Activated B cell treated with CpG ODN at 0.5 μM for 24 hours (primary cell): ENCODE measurements at regions of chr5 and their contacts with region 1.

Region 1: DNA sequence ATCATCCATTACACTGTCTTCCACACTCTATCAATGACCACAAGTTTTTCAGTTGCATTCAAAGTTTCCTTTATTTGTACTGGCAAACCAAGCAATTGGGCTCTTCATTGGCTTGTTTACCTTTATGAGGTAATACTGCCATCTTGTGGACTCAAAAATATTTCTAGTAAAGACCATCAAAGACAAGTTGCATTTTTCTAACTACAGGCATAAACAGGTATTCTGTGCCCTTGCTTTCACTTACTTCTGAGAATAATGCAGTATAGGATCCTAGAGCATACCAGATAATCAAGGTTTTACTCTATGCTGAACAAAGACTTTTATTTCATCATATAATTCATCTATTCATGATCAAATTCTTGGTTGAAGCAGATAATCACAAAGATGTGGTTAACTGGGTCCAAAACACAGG is 173.7 kb upstream of the POU5F2 start:
- DNase-seq: no peak
- ATAC-seq: no peak
- H3K4me3 Mint-ChIP-seq: no peak overlapping the region
- H3K27ac Mint-ChIP-seq: no peak overlapping the region
- H3K4me1 Mint-ChIP-seq: no peaks in the 10 kb centered on the region
- H3K27me3 Mint-ChIP-seq: no peaks in the 10 kb centered on the region
- CTCF ChIP-seq: no peak

Region 2: GRCh38 chr5:92309336-92309991 is 1605.7 kb before region 1 on chr5:
- CTCF ChIA-PET with region 1: no interaction called
- POLR2A ChIA-PET with region 1: no interaction called
- intact Hi-C with region 1: loop called (anchors 5 kb)
- DNase-seq: no peak
- ATAC-seq: no peak
- H3K4me3 Mint-ChIP-seq: no peak overlapping the region
- H3K27ac Mint-ChIP-seq: no peak overlapping the region
- H3K4me1 Mint-ChIP-seq: no peaks in the 10 kb centered on the region
- H3K27me3 Mint-ChIP-seq: no peaks in the 10 kb centered on the region
- CTCF ChIP-seq: no peak

Region 3: GRCh38 chr5:93273176-93273575 is 642.0 kb before region 1 on chr5:
- CTCF ChIA-PET with region 1: no interaction called
- POLR2A ChIA-PET with region 1: no interaction called
- intact Hi-C with region 1: no loop called
- DNase-seq: no peak
- ATAC-seq: no peak
- H3K4me3 Mint-ChIP-seq: no peak overlapping the region
- H3K27ac Mint-ChIP-seq: no peak overlapping the region
- H3K4me1 Mint-ChIP-seq: no peaks in the 10 kb centered on the region
- H3K27me3 Mint-ChIP-seq: no peaks in the 10 kb centered on the region
- CTCF ChIP-seq: no peak

Region 4: DNA sequence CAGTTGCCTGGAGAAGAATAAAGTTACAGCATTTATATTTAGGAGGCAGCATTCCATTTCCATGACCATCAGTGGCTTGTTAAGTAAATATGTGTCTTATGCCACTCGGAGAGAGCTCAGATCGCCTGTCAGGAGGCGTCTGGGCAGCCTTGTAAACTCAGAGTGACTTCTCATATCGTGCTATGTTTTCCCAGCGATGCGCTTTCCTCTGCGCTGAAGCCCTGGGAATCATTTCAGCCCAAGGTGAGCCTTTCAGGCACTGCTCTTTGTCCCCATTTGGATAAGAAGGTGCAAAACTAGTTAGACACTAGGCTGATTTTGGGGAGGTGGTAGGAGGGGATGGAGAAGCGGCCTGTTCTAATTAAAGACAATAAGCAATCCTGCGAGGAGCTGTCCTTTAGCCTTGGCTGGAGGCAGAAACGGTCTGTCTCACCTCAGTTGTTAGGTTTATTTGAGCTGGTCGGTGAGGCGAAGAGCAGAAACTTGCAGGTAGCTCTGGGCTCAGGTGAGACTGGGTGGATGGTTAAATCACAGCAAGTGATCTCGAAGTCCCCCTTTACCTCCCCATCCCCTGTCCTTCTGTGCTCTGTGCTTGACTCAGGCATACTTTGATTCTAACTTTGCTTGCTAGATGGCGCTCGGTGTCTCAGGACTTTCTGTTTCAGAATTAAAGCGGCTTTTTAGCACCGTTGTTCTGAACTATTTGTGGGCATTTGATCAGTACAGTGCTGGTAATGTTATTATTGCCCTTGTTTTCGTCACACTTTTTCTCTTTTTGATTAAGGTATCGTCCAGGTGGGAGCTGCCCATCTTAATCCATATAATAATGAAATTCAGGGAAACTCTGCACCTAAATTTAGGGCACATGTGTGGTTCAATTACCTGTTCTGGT is 307.5 kb before region 1 on chr5:
- CTCF ChIA-PET with region 1: interaction called, 3 read pairs
- POLR2A ChIA-PET with region 1: no interaction called
- intact Hi-C with region 1: loop called (anchors 2 kb)
- DNase-seq: no peak
- ATAC-seq: peak; percentile 64
- H3K4me3 Mint-ChIP-seq: peak overlapping the region; percentile 19
- H3K27ac Mint-ChIP-seq: no peak overlapping the region
- H3K4me1 Mint-ChIP-seq: peaks cover 15% of the 10 kb centered on the region
- H3K27me3 Mint-ChIP-seq: peaks cover 76% of the 10 kb centered on the region
- CTCF ChIP-seq: no peak

Region 5: GRCh38 chr5:94731471-94731870 is 816.3 kb after region 1 on chr5:
- CTCF ChIA-PET with region 1: no interaction called
- POLR2A ChIA-PET with region 1: no interaction called
- intact Hi-C with region 1: loop called (anchors 10 kb)
- DNase-seq: no peak
- ATAC-seq: no peak
- H3K4me3 Mint-ChIP-seq: no peak overlapping the region
- H3K27ac Mint-ChIP-seq: no peak overlapping the region
- H3K4me1 Mint-ChIP-seq: no peaks in the 10 kb centered on the region
- H3K27me3 Mint-ChIP-seq: no peaks in the 10 kb centered on the region
- CTCF ChIP-seq: no peak